Lower leg skin (tissue), 4 donors: ENCODE measurements at regions of chr1 and their contacts with region 1.

Region 1: GRCh38 chr1:2194898-2195673 is 514 bp upstream of the FAAP20 start:
- DNase-seq: peak; percentile 85 to 98
- H3K4me3 ChIP-seq: peak overlapping the region; percentile 28
- CTCF ChIP-seq: peak in 1 of 3 donors; percentile 97
- POLR2A ChIP-seq: no peak

Region 2: GRCh38 chr1:1550591-1551432 is 644.3 kb before region 1 on chr1:
- intact Hi-C with region 1: no loop called
- DNase-seq: no peak
- H3K4me3 ChIP-seq: no peak overlapping the region
- CTCF ChIP-seq: no peak
- POLR2A ChIP-seq: no peak

Region 3: DNA sequence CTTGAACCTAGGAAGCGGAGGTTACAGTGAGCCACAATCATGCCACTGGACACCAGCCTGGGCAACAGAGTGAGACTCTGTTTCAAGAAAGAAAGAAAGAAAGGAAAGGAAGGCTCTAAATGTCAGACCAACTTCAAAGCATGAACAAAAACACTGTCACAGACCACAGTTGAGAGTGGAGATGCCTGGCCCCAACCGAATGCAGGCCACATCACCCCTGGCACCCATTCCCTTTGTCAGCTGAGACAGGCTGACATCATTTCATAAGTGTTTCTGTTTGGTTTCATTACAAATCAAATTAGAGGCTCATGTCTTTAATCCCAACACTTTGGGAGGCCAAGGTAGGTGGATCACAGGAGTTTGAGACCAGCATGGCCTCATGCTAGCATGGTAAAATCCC is 388.2 kb before region 1 on chr1:
- intact Hi-C with region 1: no loop called
- DNase-seq: no peak
- H3K4me3 ChIP-seq: no peak overlapping the region
- CTCF ChIP-seq: no peak
- POLR2A ChIP-seq: no peak

Region 4: GRCh38 chr1:2314803-2315673 is 120.0 kb after region 1 on chr1:
- intact Hi-C with region 1: loop called (anchors 10 kb)
- DNase-seq: peak in 1 of 2 donors; percentile 94
- H3K4me3 ChIP-seq: peak overlapping the region; percentile 10
- CTCF ChIP-seq: peak in 1 of 3 donors; percentile 30
- POLR2A ChIP-seq: no peak

Region 5: GRCh38 chr1:2381741-2382620 is 186.9 kb after region 1 on chr1:
- intact Hi-C with region 1: loop called (anchors 2 kb)
- DNase-seq: peak; percentile 60 to 96
- H3K4me3 ChIP-seq: no peak overlapping the region
- CTCF ChIP-seq: peak in 1 of 3 donors; percentile 83
- POLR2A ChIP-seq: no peak